ENCODE measurements at regions of chr17 and their contacts with region 1.

Region 1: DNA sequence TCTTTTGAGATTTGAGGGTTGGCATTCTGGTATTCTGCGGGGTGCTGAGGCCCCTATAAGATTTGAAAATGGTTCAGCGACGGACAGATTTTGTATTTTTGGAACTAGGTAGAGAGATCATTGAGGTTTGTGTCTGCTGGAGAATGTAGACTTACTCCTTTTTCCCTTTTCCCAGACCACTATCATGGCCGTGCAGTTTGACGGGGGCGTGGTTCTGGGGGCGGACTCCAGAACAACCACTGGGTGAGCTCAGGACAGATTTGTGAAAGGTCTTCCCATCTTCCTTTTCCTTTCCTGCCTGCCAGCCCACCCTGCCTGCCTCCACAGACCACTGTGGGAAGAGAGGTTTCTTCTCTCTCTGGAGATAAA is 573 bp downstream of the PSMB6 start:
- DNase-seq: peak; percentile 59

Region 2: GRCh38 chr17:4721203-4722135 is 75.1 kb before region 1 on chr17:
- CTCF ChIA-PET with region 1: no interaction called
- POLR2A ChIA-PET with region 1: no interaction called
- DNase-seq: no peak

Region 3: DNA sequence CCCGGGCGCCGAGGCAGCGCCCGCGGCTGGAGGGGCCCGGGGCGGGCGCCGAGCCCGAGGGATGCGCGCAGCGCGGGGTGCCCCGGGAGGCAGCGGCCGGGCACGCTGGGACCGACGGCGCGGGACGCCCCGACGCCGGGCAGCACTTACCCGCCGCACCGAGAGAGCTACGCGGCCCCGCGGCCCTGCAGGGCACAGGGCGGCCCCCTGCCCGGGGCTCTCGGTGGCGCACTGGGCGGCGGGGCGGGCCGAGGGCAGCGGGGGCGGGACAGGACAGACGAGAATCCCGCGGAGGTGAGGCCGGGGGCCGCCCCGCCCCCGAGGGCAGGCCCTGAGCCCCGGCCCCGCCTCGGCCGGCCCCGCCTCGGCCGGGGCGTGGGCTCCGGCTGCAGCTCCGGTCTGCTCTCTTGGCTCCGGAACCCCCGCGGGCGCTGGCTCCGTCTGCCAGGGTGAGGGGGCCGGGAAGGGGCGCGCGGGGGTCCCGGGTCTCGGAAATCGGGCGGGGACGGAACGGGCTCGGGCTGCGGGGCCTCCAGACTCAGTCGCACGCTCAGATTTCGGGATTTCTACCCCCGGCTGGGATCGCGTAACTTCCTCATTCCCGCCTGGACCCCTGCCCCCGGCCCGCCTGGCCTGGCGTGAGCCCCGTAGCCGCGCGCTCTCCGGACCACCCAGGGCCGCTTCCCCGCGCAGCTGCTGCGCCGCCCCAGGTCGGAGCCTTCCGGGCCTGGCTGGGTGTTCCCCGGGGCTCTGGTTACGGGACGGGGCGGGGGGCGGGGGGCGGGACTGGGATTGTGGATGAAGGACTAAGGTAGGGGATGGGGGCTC is 10.5 kb after region 1 on chr17 and contains the start of gene PLD2:
- CTCF ChIA-PET with region 1: no interaction called
- POLR2A ChIA-PET with region 1: interaction called, 19 read pairs
- DNase-seq: peak; percentile 97

Measured in HEK293T (cell line).